Left ventricle myocardium inferior (tissue), 1 donor: ENCODE measurements at regions of chr7 and their contacts with region 1.

Region 1: GRCh38 chr7:139777948-139778841 is at the start of gene HIPK2:
- DNase-seq: peak; percentile 84
- H3K4me3 ChIP-seq: peak within 1 kb of the TSS; percentile 93
- H3K27ac ChIP-seq: peak within 1 kb of the TSS; percentile 94
- H3K4me1 ChIP-seq: peaks cover 47% of the 10 kb centered on the region
- H3K27me3 ChIP-seq: no peaks in the 10 kb centered on the region
- CTCF ChIP-seq: no peak
- total RNA-seq, gene HIPK2: 127 TPM

Region 2: DNA sequence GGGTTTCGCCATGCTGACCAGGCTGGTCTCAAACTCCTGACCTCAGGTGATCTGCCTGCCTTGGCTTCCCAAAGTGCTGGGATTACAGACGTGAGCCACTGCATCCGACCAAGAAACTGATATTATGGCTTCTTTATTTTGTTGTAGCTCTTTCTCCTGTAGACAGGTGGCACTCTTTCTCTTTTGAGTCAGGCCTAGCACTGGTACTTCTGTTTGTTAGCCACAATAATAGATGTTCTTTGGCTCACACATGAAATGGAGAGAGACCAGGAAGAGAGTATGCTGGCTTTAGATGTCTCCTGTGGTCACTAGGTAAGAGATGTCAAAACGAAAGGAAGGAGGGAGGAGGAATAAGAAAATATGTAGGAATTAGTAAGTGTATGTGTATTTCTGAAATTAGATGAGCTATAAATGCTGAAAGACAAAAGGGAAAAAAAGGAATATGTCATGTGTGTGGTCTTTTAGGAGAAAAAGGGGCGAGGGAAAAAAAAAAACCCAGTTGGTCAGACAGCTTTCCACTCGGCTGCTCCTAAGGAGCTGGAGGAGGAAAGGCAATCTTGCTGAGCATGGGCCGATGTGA is 176.0 kb before region 1 on chr7:
- intact Hi-C with region 1: no loop called
- DNase-seq: no peak
- H3K4me3 ChIP-seq: no peak overlapping the region
- H3K27ac ChIP-seq: peak overlapping the region; percentile 3
- H3K4me1 ChIP-seq: peaks cover 32% of the 10 kb centered on the region
- H3K27me3 ChIP-seq: no peaks in the 10 kb centered on the region
- CTCF ChIP-seq: peak; percentile 64

Region 3: GRCh38 chr7:139645572-139646523 is 132.3 kb before region 1 on chr7:
- intact Hi-C with region 1: loop called (anchors 5 kb)
- DNase-seq: peak; percentile 78
- H3K4me3 ChIP-seq: no peak overlapping the region
- H3K27ac ChIP-seq: peak overlapping the region; percentile 83
- H3K4me1 ChIP-seq: peaks cover 61% of the 10 kb centered on the region
- H3K27me3 ChIP-seq: no peaks in the 10 kb centered on the region
- CTCF ChIP-seq: peak; percentile 94

Region 4: GRCh38 chr7:139696552-139696951 is 81.6 kb before region 1 on chr7:
- intact Hi-C with region 1: loop called (anchors 10 kb)
- DNase-seq: no peak
- H3K4me3 ChIP-seq: no peak overlapping the region
- H3K27ac ChIP-seq: no peak overlapping the region
- H3K4me1 ChIP-seq: peaks cover 70% of the 10 kb centered on the region
- H3K27me3 ChIP-seq: no peaks in the 10 kb centered on the region
- CTCF ChIP-seq: no peak

Region 5: DNA sequence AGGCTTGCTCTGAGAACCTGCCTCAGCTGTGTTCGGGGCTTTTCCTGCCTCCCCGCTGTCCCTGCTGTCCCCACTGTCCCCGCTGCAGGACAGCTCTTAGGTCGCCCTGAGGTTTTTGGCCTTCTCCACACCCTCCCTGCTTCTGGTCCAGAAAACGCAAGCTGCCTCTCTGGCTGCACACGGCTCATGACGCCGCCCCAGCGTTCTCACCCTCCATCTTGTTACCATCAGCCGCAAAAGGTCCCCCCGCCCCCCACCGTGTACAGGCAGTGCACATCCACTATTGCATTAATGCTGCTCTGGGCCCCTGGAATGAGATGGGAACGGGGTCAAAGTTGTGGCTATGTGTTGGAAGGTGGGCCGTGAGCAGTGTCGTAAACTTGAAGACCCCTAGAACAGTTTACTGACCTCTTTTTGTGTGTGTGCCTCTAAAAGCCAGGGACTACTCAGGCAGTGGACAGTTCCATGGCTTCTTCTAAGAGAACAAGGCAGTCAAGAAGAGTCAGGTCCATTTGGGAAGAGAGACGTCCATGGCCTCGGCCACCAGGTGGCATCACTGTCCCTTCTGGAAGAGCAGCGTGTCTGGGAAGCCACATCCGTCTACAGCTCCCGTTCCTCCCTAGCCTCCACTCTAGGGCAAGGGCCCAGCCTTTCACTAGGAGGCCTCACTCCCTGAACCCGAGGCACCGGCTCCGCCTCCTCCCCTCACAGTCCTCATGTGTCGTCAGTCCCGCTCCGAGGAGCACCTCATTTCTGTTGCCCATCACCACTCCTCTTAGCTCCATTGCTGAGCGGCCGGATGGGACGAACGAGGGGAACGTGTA is 739.6 kb after region 1 on chr7:
- intact Hi-C with region 1: no loop called
- DNase-seq: peak; percentile 90
- H3K4me3 ChIP-seq: no peak overlapping the region
- H3K27ac ChIP-seq: peak overlapping the region; percentile 69
- H3K4me1 ChIP-seq: peaks cover 20% of the 10 kb centered on the region
- H3K27me3 ChIP-seq: no peaks in the 10 kb centered on the region
- CTCF ChIP-seq: peak; percentile 94